Naive thymus-derived CD4-positive, alpha-beta T cell (primary cell): ENCODE measurements at regions of chr9 and their contacts with region 1.

Region 1: GRCh38 chr9:128191406-128192046 is at the start of gene CIZ1:
- DNase-seq: peak; percentile 51 to 86 (median 69)
- ATAC-seq: peak; percentile 95
- H3K4me3 ChIP-seq: peak within 1 kb of the TSS; percentile 76
- H3K4me3 Mint-ChIP-seq: peak within 1 kb of the TSS; percentile 92 to 99 (median 96)
- H3K27ac ChIP-seq: peak within 1 kb of the TSS; percentile 89
- H3K27ac Mint-ChIP-seq: peak within 1 kb of the TSS; percentile 84 to 93 (median 90)
- H3K4me1 ChIP-seq: peaks cover 12 to 16% of the 10 kb centered on the region in 2 donors
- H3K4me1 Mint-ChIP-seq: peaks cover 13 to 39% (median 31%) of the 10 kb centered on the region in 7 donors
- H3K27me3 ChIP-seq: no peaks in the 10 kb centered on the region
- H3K27me3 Mint-ChIP-seq: peaks cover 0 to 13% (median 0%) of the 10 kb centered on the region in 5 donors
- total RNA-seq, gene CIZ1: 110 to 163 (median 142) TPM

Region 2: GRCh38 chr9:126773004-126773607 is 1418.4 kb before region 1 on chr9:
- CTCF ChIA-PET with region 1: no interaction called
- POLR2A ChIA-PET with region 1: no interaction called
- intact Hi-C with region 1: no loop called
- DNase-seq: no peak
- ATAC-seq: no peak
- H3K4me3 ChIP-seq: no peak overlapping the region
- H3K4me3 Mint-ChIP-seq: no peak overlapping the region
- H3K27ac ChIP-seq: no peak overlapping the region
- H3K27ac Mint-ChIP-seq: no peak overlapping the region
- H3K4me1 ChIP-seq: no peaks in the 10 kb centered on the region
- H3K4me1 Mint-ChIP-seq: peaks cover 0 to 2% (median 0%) of the 10 kb centered on the region in 7 donors
- H3K27me3 ChIP-seq: peaks cover 0 to 5% of the 10 kb centered on the region in 2 donors
- H3K27me3 Mint-ChIP-seq: peaks cover 1 to 45% (median 6%) of the 10 kb centered on the region in 5 donors

Region 3: GRCh38 chr9:128175102-128175563 is 16.4 kb before region 1 on chr9:
- CTCF ChIA-PET with region 1: interaction called, 3 read pairs
- POLR2A ChIA-PET with region 1: interaction called, 6 read pairs
- intact Hi-C with region 1: loop called in 1 of 2 experiments (anchors 2 kb)
- DNase-seq: no peak
- ATAC-seq: no peak
- H3K4me3 ChIP-seq: no peak overlapping the region
- H3K4me3 Mint-ChIP-seq: no peak overlapping the region
- H3K27ac ChIP-seq: no peak overlapping the region
- H3K27ac Mint-ChIP-seq: peak overlapping the region in 1 of 9 donors; percentile 63
- H3K4me1 ChIP-seq: no peaks in the 10 kb centered on the region
- H3K4me1 Mint-ChIP-seq: no peaks in the 10 kb centered on the region
- H3K27me3 ChIP-seq: no peaks in the 10 kb centered on the region
- H3K27me3 Mint-ChIP-seq: no peaks in the 10 kb centered on the region

Region 4: DNA sequence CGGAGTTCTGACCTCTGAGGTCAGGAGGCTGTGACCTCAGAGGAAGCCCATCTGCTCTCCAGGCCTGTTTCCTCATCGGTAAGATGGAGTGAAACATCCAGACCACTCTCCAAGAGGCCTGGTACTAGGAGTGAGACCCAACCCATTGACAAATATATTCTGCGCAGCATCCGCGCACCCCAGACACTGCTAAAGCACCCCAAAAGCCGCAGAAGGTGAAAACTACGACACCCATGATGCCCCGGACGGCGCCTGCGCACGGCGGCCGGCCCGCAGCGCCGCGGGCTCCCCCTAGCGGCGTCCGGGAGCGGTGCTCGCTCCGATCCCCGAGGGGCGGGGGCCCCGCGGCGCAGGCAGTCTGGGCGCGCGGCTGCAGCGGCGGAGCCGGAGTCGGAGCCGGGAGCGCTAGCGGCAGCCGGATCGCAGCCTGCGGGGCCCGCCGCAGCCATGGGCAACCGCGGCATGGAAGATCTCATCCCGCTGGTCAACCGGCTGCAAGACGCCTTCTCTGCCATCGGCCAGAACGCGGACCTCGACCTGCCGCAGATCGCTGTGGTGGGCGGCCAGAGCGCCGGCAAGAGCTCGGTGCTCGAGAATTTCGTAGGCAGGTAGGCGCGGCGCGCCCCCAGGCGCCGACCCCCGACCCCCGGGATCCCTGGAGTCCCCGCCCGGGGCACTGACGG is 11.6 kb after region 1 on chr9 and contains the start of gene DNM1:
- CTCF ChIA-PET with region 1: interaction called, 4 read pairs
- POLR2A ChIA-PET with region 1: interaction called, 7 read pairs
- intact Hi-C with region 1: loop called (anchors 1 kb)
- DNase-seq: peak; percentile 50 to 89 (median 80)
- ATAC-seq: peak; percentile 99
- H3K4me3 ChIP-seq: peak within 1 kb of the TSS; percentile 51
- H3K4me3 Mint-ChIP-seq: peak within 1 kb of the TSS; percentile 63 to 83 (median 76)
- H3K27ac ChIP-seq: no peak within 1 kb of the TSS
- H3K27ac Mint-ChIP-seq: peak within 1 kb of the TSS in 7 of 9 donors; percentile 3 to 84 (median 73)
- H3K4me1 ChIP-seq: peaks cover 4 to 8% of the 10 kb centered on the region in 2 donors
- H3K4me1 Mint-ChIP-seq: peaks cover 6 to 14% (median 8%) of the 10 kb centered on the region in 7 donors
- H3K27me3 ChIP-seq: peaks cover 0 to 5% of the 10 kb centered on the region in 2 donors
- H3K27me3 Mint-ChIP-seq: peaks cover 0 to 33% (median 6%) of the 10 kb centered on the region in 5 donors
- total RNA-seq, gene DNM1: 0.24 to 2.0 (median 0.94) TPM